Panc1 (cell line): ENCODE measurements at regions of chr11 and their contacts with region 1.

Region 1: GRCh38 chr11:70265341-70265740 is 5.1 kb upstream of the PPFIA1 start:
- DNase-seq: no peak
- ATAC-seq: no peak
- H3K4me3 ChIP-seq: no peak overlapping the region
- H3K27ac ChIP-seq: no peak overlapping the region
- H3K4me1 ChIP-seq: peaks cover 5% of the 10 kb centered on the region; the same call in 1 of the 2 replicates
- H3K27me3 ChIP-seq: no peaks in the 10 kb centered on the region
- CTCF ChIP-seq: no peak

Region 2: DNA sequence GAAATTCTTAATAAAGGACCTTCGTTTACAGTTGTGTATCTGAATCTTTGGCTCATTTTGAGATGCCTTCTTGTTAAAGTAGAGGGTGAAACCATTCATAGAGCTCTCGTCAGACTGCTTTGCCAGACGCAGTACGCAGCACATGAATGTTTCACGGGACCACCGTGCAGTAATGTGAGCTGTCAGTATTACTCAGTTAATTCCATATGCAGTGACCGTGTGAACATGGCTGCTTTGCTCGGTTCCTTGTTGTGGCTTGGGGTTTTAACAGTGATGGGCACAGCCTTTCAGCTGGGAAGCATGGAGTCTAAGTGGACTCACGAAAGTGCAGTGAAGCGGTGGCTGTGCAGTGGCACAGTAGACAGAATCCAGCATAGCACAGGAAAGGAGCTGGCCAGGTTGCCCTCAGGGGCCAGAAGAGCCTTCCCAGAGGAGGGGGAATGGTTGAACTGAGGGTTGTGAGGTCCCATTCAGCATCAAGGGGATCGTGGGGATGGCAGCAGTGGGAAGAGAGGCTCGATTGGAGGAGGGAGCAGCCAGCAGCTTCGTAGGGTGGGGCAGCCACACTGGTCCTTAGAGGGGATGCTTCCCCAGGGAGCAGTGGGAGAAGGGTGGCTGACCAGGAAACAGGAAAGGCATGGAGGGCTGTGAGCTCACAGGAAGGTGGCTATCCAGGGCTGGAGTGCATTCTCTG is 36.5 kb after region 1 on chr11:
- CTCF ChIA-PET with region 1: no interaction called
- POLR2A ChIA-PET with region 1: interaction called, 15 read pairs
- in situ Hi-C with region 1: no loop called
- intact Hi-C with region 1: no loop called
- DNase-seq: no peak
- ATAC-seq: no peak
- H3K4me3 ChIP-seq: no peak overlapping the region
- H3K27ac ChIP-seq: no peak overlapping the region
- H3K4me1 ChIP-seq: peaks cover 16% of the 10 kb centered on the region
- H3K27me3 ChIP-seq: no peaks in the 10 kb centered on the region
- CTCF ChIP-seq: no peak

Region 3: GRCh38 chr11:70717936-70718595 is 452.7 kb after region 1 on chr11:
- CTCF ChIA-PET with region 1: no interaction called
- POLR2A ChIA-PET with region 1: no interaction called
- in situ Hi-C with region 1: no loop called
- intact Hi-C with region 1: no loop called
- DNase-seq: no peak
- ATAC-seq: no peak
- H3K4me3 ChIP-seq: no peak overlapping the region
- H3K27ac ChIP-seq: no peak overlapping the region
- H3K4me1 ChIP-seq: no peaks in the 10 kb centered on the region
- H3K27me3 ChIP-seq: peaks cover 34% of the 10 kb centered on the region
- CTCF ChIP-seq: no peak